ENCODE measurements at regions of chr3 and their contacts with region 1.

Region 1: DNA sequence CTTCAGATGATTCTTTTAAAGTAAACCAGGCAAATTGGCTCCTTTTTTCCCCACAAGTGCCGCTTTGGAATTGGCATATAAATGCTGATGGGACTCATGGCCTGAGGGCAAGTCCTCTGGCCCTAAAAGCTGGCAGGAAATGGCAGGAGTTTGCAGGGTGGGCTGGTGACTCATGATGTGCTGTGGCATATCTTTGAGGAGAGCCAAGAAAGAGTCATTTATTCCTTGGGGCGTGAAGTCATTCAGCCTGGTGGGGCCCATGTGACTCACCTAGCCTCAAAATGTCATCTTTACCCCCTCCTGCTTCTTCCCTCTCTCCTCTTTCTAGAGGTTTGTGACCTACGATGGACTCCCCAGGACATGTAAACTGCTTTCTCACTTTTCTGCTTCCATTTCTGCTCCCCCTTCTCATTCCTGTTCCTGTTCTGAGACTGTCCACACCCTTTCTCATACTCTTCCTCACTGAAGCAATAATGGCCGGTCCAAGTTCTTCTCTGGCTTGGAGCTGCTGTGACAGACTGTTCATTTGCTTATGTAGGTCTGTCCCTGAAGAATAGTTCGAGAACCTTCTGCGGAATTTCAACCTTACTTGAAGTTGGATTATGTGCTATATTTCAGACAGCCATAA is 326.1 kb downstream of the SATB1 start:
- DNase-seq: no peak
- H3K4me3 Mint-ChIP-seq: no peak overlapping the region
- H3K27ac Mint-ChIP-seq: peak overlapping the region; percentile 95
- H3K4me1 Mint-ChIP-seq: peaks cover 27% of the 10 kb centered on the region
- H3K27me3 Mint-ChIP-seq: no peaks in the 10 kb centered on the region

Region 2: GRCh38 chr3:17964108-17964507 is 135.0 kb before region 1 on chr3:
- intact Hi-C with region 1: loop called (anchors 1 kb)
- DNase-seq: no peak
- H3K4me3 Mint-ChIP-seq: no peak overlapping the region
- H3K27ac Mint-ChIP-seq: peak overlapping the region; percentile 54
- H3K4me1 Mint-ChIP-seq: peaks cover 11% of the 10 kb centered on the region
- H3K27me3 Mint-ChIP-seq: peaks cover 2% of the 10 kb centered on the region

Region 3: GRCh38 chr3:18018491-18019160 is 80.4 kb before region 1 on chr3:
- intact Hi-C with region 1: no loop called
- DNase-seq: no peak
- H3K4me3 Mint-ChIP-seq: no peak overlapping the region
- H3K27ac Mint-ChIP-seq: no peak overlapping the region
- H3K4me1 Mint-ChIP-seq: no peaks in the 10 kb centered on the region
- H3K27me3 Mint-ChIP-seq: peaks cover 26% of the 10 kb centered on the region

Region 4: DNA sequence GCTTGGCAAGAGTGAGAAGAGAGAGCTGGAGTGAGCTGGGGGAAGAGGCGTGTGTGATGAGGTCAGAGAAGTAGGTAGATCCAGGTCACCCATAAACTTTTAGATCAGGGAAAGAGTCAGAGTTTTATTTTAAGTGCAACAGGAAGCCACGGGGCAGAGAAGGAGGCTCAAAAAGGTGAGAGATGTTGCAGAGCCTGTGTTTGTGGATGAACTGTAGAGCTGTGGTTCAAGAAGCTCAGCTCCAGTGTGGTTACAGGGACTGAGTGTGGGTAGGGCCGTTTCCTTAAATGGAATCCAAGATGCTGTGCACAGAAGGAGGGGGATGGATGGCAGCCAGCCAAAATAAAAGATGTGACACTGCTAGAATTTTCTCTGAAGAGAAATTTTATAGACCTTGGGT is 11.1 kb before region 1 on chr3:
- intact Hi-C with region 1: loop called (anchors 1 kb)
- DNase-seq: no peak
- H3K4me3 Mint-ChIP-seq: no peak overlapping the region
- H3K27ac Mint-ChIP-seq: peak overlapping the region; percentile 62
- H3K4me1 Mint-ChIP-seq: peaks cover 10% of the 10 kb centered on the region
- H3K27me3 Mint-ChIP-seq: peaks cover 5% of the 10 kb centered on the region

Region 5: DNA sequence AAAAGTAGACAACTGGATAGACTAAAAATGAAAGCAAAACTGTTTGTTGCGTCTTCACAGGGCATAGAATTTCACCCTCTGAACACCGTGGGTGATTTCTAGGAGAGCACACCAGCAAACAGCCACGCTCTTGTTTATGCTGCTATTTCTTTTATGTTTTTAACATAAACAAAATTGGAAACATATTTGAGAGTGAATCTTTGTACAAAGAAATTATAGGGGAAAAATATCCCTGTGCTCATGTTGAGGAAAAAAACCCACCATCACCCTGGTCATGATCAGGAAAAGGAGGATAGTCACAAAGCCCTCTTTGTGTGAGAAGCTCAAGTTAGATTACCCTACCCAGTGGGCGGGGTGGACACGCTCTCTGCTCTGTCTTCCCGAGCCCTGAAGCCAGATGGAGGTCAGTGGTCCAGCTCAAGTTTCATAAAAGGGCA is 12.7 kb after region 1 on chr3:
- intact Hi-C with region 1: loop called (anchors 1 kb)
- DNase-seq: no peak
- H3K4me3 Mint-ChIP-seq: peak overlapping the region; percentile 37
- H3K27ac Mint-ChIP-seq: peak overlapping the region; percentile 67
- H3K4me1 Mint-ChIP-seq: peaks cover 9% of the 10 kb centered on the region
- H3K27me3 Mint-ChIP-seq: no peaks in the 10 kb centered on the region

Region 6: GRCh38 chr3:18369551-18370185 is 270.6 kb after region 1 on chr3:
- intact Hi-C with region 1: no loop called
- DNase-seq: no peak
- H3K4me3 Mint-ChIP-seq: no peak overlapping the region
- H3K27ac Mint-ChIP-seq: peak overlapping the region; percentile 64
- H3K4me1 Mint-ChIP-seq: peaks cover 83% of the 10 kb centered on the region
- H3K27me3 Mint-ChIP-seq: no peaks in the 10 kb centered on the region